K562 (cell line): ENCODE measurements at regions of chr6 and their contacts with region 1.

Region 1: DNA sequence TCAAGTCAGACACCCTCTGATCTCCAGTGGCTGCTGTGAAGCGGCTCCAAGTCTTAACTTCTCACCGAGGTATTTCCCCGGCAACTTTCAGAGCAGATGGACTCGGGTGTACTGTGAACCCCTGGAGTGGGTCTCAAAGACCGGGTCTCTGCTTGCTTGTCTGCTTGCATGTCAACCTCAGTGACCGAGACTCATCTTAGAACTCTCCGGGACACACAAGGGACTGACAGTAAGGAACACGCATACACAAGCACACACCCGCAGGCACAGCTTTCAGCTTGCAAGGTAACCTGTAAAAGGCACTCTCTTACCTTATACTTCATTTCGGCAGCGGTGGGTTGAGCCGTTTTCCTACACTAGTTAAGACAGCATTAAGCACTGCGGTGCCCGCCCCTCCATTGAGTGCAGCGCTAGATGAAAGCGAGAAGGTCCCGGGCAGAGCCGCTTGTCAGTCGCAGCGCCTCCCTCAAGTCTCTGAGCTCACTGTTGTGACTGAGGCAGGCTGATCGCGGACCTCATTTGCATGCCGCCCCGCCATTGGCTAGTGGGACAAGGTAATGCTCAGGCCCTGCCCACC is at the start of gene NEDD9:
- DNase-seq: peak; percentile 95 to 97 (median 96)
- ATAC-seq: peak; percentile 100
- H3K4me3 ChIP-seq: peak within 1 kb of the TSS; percentile 35
- H3K27ac ChIP-seq: no peak within 1 kb of the TSS
- H3K4me1 ChIP-seq: peaks cover 6 to 10% of the 10 kb centered on the region in 2 experiments; a peak in 4 of 5 replicates
- H3K27me3 ChIP-seq: peaks cover 18 to 27% of the 10 kb centered on the region in 2 experiments; a peak in 4 of 5 replicates
- CTCF ChIP-seq: peak in 1 of 3 experiments; percentile 13; a peak in 2 of 6 replicates
- EP300 ChIP-seq: no peak
- POLR2A ChIP-seq: no peak
- RAD21 ChIP-seq: peak in 1 of 2 experiments; percentile 9; a peak in 1 of 4 replicates
- polyA plus RNA-seq, gene NEDD9: not detected

Region 2: DNA sequence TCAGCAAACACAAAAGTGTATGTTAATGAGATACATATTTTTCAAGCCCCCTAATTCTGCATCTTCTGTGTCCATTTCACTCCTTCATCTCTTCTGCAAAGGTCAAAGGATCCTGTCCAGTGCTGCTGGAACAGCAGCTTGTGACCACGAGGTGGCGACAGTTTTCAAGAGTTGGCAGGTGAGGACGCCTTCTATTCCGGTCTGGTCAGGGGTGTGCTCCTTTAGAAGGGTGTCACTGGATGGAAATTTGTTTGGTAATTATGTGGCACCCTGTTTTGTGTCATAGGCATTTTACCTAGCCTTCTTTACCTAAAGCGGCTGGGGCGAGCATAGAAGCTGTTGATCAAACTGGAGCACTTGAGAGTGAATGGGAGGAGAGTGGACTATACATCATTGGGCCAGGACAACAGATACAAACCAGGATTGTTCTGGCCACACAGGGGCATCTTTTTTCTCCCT is 87.9 kb before region 1 on chr6:
- CTCF ChIA-PET with region 1: no interaction called
- POLR2A ChIA-PET with region 1: no interaction called
- in situ Hi-C with region 1: no loop called
- intact Hi-C with region 1: loop called (anchors 5 kb)
- DNase-seq: peak; percentile 81 to 88 (median 82)
- ATAC-seq: peak; percentile 97
- H3K4me3 ChIP-seq: no peak overlapping the region
- H3K27ac ChIP-seq: no peak overlapping the region
- H3K4me1 ChIP-seq: peaks cover 0 to 8% of the 10 kb centered on the region in 2 experiments; a peak in 3 of 5 replicates
- H3K27me3 ChIP-seq: peaks cover 0 to 17% of the 10 kb centered on the region in 2 experiments; a peak in 2 of 5 replicates
- CTCF ChIP-seq: peak; percentile 89 to 97 (median 96)
- EP300 ChIP-seq: no peak
- POLR2A ChIP-seq: no peak
- RAD21 ChIP-seq: peak; percentile 91 to 92